Posterior vena cava (tissue), 2 donors: ENCODE measurements at regions of chr2 and their contacts with region 1.

Region 1: DNA sequence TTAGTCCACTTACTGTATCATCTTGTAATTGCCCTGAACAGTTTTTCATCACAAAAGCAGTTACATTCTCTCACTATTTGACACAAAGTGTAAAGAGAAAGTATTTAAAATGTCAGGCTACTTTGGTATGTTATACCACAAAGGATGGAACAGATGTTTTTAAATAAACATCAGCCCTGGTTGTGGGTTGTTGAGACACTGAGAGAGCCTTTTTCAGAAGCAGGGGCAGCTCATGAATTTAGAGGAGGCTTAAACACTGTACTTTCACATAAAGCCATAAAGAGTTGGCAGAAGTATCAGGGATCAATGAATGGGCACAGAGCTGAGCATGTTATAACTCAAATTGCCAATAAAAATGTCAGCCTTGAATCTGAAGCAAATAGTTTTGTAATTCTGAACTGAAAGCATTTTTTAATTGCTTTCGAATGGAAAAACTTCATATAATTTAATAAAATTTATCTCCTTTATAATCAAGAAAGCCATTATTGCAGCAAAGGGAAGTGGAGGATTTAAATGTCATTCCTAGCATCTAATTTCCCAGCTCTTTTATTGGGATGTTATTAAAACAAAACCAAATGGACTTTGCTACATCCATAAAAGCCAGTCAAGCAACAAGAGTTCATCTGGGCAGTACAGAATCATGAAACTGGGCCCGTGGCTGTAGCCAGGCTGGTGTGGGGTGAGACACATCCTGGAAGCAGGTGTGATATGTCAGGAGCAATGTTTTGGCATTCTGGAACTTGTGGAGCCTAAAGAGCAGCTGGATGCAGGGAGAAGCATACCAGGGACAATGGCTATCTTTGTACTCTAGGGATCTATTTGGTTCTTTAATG is 95.1 kb upstream of the NT5C1B start:
- DNase-seq: no peak

Region 2: DNA sequence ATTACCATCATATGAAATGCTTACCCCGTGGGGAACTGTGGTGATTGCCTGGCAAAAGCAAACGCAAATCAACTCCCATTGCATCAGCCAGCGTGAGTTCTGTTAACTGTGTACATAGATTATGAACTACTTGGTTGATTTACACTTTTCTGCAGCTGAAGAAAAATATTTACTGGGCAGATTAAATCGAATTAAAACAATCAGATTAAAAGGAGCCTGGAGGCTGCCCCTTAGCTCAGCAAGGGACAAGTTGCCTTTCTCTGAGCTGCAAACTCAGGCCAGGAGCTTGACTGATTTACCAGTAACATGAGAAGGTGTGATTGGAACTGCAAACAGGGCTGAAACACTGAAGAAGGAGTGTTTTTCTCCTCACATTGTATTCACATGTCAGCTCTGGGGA is 453.9 kb after region 1 on chr2:
- intact Hi-C with region 1: loop called in 1 of 2 experiments (anchors 5 kb)
- DNase-seq: no peak

Region 3: DNA sequence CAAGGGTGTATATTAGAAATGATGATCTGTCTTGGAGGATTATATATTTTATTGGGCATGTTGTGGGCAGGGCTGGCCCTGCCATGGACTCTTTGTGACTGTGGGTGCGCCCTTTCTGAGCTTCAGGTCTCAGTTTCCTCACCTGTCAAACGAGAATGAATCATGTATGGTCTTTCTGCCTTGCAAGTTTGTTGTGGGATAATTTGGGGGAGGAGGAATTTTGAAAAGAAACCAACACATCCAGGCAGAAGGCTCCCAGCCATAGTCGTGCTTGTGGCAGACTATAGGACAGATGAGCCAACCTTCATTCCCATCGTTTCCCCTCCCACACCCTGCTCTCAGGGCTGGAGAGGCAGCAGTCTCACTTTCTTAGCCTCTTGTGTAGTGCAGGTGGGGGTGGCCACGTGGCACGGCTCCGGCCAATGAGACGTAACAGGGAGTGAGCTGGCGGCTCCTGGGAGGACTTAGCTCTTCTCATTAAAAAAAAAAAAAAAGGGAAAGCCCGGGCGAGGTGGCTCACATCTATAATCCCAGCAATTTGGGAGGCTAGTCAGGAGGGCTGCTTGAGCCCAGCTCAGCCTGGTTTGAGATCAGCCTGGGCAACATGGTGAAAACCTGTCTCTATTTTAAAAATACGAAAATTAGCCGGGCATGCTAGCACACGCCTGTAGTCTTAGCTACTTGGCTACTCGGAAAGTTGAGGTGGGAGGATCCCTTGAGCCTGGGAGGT is 1825.5 kb after region 1 on chr2:
- intact Hi-C with region 1: loop called in 1 of 2 experiments (anchors 5 kb)
- DNase-seq: no peak